GM10248 (cell line): ENCODE measurements at regions of chr16 and their contacts with region 1.

Region 1: GRCh38 chr16:85746008-85746781 is 4.7 kb downstream of the C16orf74 start:
- DNase-seq: no peak
- CTCF ChIP-seq: no peak

Region 2: GRCh38 chr16:85735225-85735635 is 11.0 kb before region 1 on chr16:
- CTCF ChIA-PET with region 1: interaction called, 15 read pairs
- POLR2A ChIA-PET with region 1: no interaction called
- DNase-seq: peak; percentile 82
- CTCF ChIP-seq: no peak